Activated T-helper 2 cell treated with anti-CD3 and anti-CD28 coated beads, Interferon-gamma antibody, Interleukin-2, Interleukin-4, amounts not matched to agents 10 μg/mL and 5 μg/mL and 100 μg/mL, durations not matched to agents 14 hours and 24 hours and 36 hours (primary cell): ENCODE measurements at regions of chr4 and their contacts with region 1.

Region 1: GRCh38 chr4:10096201-10096977 is 20.2 kb downstream of the WDR1 start:
- DNase-seq: peak; percentile 73
- H3K4me3 Mint-ChIP-seq: peak overlapping the region; percentile 5
- H3K27ac Mint-ChIP-seq: peak overlapping the region; percentile 92
- H3K4me1 Mint-ChIP-seq: peaks cover 86% of the 10 kb centered on the region
- H3K27me3 Mint-ChIP-seq: no peaks in the 10 kb centered on the region

Region 2: GRCh38 chr4:9812501-9813340 is 283.7 kb before region 1 on chr4:
- intact Hi-C with region 1: loop called (anchors 1 kb)
- DNase-seq: no peak
- H3K4me3 Mint-ChIP-seq: no peak overlapping the region
- H3K27ac Mint-ChIP-seq: no peak overlapping the region
- H3K4me1 Mint-ChIP-seq: peaks cover 15% of the 10 kb centered on the region
- H3K27me3 Mint-ChIP-seq: peaks cover 48% of the 10 kb centered on the region

Region 3: DNA sequence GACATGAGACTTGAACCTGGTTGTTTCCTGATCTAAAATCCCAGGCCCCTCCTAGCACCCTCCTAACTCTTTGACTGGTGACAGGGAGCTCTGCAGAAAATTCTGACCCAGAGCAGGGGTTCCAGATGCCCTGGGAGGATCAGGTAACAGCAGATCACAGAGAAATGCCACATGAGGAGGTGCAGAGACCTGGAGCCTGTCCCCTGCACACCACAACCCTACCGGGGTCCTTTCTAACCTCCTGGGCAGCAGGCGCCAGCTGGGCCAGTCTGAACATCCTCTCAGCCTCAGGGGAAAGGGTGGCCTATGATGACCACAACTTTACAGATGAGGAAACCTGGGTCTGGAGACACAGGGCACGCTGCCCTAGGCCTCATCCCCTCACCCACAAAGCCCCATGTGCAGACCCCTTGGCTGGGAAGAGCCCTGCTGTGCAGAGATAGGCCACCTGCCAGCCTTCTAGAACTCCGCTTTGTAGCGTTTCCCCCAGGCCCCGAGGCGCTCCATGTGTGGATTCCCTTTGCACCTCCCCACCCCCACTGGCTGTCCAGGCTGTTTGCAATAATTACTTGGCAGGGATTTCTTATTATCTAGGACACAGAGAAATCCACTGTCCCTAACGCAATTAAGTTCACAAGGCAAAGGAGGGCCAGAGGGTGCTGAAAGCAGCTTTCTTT is 16.3 kb before region 1 on chr4:
- intact Hi-C with region 1: no loop called
- DNase-seq: no peak
- H3K4me3 Mint-ChIP-seq: no peak overlapping the region
- H3K27ac Mint-ChIP-seq: no peak overlapping the region
- H3K4me1 Mint-ChIP-seq: no peaks in the 10 kb centered on the region
- H3K27me3 Mint-ChIP-seq: no peaks in the 10 kb centered on the region

Region 4: GRCh38 chr4:10106421-10107039 is 10.1 kb after region 1 on chr4:
- intact Hi-C with region 1: loop called (anchors 1 kb)
- DNase-seq: peak; percentile 37
- H3K4me3 Mint-ChIP-seq: peak overlapping the region; percentile 67
- H3K27ac Mint-ChIP-seq: peak overlapping the region; percentile 83
- H3K4me1 Mint-ChIP-seq: peaks cover 96% of the 10 kb centered on the region
- H3K27me3 Mint-ChIP-seq: no peaks in the 10 kb centered on the region

Region 5: DNA sequence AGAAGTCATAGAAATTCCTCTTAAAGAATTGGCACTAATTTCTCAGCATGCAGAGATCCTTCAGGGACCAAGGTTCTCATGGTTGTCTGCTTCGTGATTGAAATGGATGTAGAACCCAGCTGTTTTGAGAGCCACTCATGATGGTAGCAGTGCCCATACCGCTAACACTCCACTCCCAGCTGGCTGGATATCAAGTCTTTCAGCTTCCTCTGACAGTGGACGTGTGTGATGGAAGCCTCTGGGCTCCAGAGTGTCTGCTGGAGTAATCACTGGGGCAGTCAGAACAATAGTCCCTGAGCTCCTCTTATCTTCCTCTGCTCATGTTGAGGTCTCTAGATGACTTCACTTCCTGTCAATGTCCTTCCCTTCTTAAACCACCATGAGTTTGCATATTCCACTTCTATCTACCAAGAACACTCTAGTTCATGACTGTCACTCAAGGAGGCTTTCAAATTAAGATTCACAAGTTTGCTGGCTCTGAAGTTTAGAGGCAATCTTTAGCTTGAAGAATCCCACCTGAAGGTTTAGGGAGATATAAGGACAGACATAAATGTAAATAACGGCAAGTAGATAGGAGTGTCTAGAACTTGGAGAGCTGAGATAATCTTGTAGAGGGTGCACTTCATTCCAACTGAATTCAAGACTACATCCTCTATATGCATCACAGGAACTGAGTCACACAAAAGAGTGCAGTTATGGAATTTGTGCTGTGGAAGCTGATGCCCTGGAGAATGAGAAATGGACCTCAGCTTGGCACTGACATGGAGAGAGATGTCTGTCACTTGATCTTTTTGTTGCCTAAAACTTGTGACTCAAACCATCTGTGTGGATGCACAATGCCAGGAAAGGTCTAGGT is 84.8 kb after region 1 on chr4:
- intact Hi-C with region 1: loop called (anchors 1 kb)
- DNase-seq: peak; percentile 30
- H3K4me3 Mint-ChIP-seq: no peak overlapping the region
- H3K27ac Mint-ChIP-seq: peak overlapping the region; percentile 87
- H3K4me1 Mint-ChIP-seq: peaks cover 38% of the 10 kb centered on the region
- H3K27me3 Mint-ChIP-seq: no peaks in the 10 kb centered on the region

Region 6: DNA sequence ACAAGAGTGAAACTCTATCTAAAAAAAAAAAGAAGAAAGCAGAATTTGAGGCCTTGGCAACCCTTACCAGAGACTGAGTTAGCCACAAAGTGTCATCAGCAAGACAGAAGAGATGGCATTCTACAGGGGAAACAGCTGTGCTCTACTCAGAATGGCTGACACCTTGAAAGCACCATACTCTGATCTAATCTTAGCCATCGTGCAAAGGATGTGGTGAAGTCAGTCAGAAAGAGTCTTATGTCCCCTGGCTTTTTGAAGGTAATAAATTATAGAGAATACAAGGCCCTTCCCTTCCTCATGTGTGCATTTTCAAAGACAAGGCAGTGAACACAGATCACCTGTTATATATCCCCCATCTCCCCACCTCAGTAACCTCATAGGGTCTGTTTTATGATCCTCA is 575.0 kb after region 1 on chr4:
- intact Hi-C with region 1: loop called (anchors 10 kb)
- DNase-seq: peak; percentile 59
- H3K4me3 Mint-ChIP-seq: peak overlapping the region; percentile 1
- H3K27ac Mint-ChIP-seq: peak overlapping the region; percentile 77
- H3K4me1 Mint-ChIP-seq: peaks cover 47% of the 10 kb centered on the region
- H3K27me3 Mint-ChIP-seq: no peaks in the 10 kb centered on the region